Psoas muscle (tissue), 8 donors: ENCODE measurements at regions of chr6 and their contacts with region 1.

Region 1: DNA sequence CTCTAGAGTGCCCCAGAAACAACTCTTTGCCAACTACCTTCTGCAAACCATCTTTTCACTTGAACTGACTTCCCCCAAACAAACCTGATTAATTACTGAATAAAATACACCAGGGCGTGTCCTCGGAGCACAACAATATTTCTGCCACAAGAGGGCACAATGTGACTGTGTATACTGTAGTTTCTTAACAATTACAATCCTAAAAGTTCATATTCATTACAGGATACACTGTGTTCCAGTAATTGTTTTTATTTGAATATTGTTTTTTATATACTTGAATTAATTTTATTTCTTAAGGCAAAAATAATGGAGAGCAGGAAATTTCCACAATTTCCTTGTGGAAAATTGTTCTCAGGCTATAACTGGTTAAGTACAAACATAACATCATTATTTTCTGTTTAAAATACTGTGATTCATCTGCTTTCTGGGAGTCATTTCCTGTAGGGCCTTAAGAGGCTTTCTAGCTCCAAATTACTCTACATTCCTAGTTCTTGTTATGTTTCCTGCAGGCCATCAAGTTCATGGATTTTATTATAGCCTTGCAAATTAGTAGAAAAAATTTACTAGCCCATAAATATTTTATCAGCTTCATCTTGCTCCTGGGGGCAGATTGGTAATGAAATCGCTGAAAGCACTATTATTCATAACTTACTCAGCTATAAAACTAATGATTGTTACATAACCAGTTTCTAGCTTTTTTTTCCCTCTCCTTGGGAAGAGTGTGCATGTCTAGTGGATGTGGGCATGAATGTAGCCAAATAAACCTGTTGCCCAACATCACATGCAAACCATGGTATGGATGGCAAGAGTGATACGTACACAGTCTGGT is 51.9 kb upstream of the SLC22A16 start:
- DNase-seq: no peak
- ATAC-seq: peak in 3 of 4 donors; percentile 68 to 76 (median 76)
- H3K4me3 ChIP-seq: no peak overlapping the region
- H3K27ac ChIP-seq: no peak overlapping the region
- H3K4me1 ChIP-seq: no peaks in the 10 kb centered on the region
- H3K27me3 ChIP-seq: no peaks in the 10 kb centered on the region
- CTCF ChIP-seq: peak; percentile 74

Region 2: GRCh38 chr6:110949679-110950285 is 421.5 kb after region 1 on chr6:
- intact Hi-C with region 1: loop called (anchors 1 to 10 kb)
- DNase-seq: no peak
- ATAC-seq: peak in 1 of 4 donors; percentile 65
- H3K4me3 ChIP-seq: no peak overlapping the region
- H3K27ac ChIP-seq: no peak overlapping the region
- H3K4me1 ChIP-seq: no peaks in the 10 kb centered on the region
- H3K27me3 ChIP-seq: no peaks in the 10 kb centered on the region
- CTCF ChIP-seq: peak; percentile 57

Region 3: GRCh38 chr6:110958329-110959192 is 430.2 kb after region 1 on chr6 and contains the start of gene GTF3C6:
- intact Hi-C with region 1: loop called in 1 of 2 experiments (anchors 10 kb)
- DNase-seq: peak; percentile 94 to 97
- ATAC-seq: peak; percentile 98 to 99 (median 98)
- H3K4me3 ChIP-seq: peak within 1 kb of the TSS; percentile 97
- H3K27ac ChIP-seq: peak within 1 kb of the TSS; percentile 98
- H3K4me1 ChIP-seq: peaks cover 7% of the 10 kb centered on the region
- H3K27me3 ChIP-seq: no peaks in the 10 kb centered on the region
- CTCF ChIP-seq: no peak
- total RNA-seq, gene GTF3C6: 112 to 143 (median 127) TPM

Region 4: GRCh38 chr6:110999634-111000270 is 471.4 kb after region 1 on chr6:
- intact Hi-C with region 1: loop called in 1 of 2 experiments (anchors 2 kb)
- DNase-seq: no peak
- ATAC-seq: peak in 1 of 4 donors; percentile 48
- H3K4me3 ChIP-seq: no peak overlapping the region
- H3K27ac ChIP-seq: no peak overlapping the region
- H3K4me1 ChIP-seq: no peaks in the 10 kb centered on the region
- H3K27me3 ChIP-seq: no peaks in the 10 kb centered on the region
- CTCF ChIP-seq: peak; percentile 51

Region 5: GRCh38 chr6:111210194-111210728 is 681.9 kb after region 1 on chr6:
- intact Hi-C with region 1: loop called in 1 of 2 experiments (anchors 10 kb)
- DNase-seq: no peak
- ATAC-seq: peak; percentile 56 to 78 (median 70)
- H3K4me3 ChIP-seq: no peak overlapping the region
- H3K27ac ChIP-seq: peak overlapping the region; percentile 70
- H3K4me1 ChIP-seq: peaks cover 28% of the 10 kb centered on the region
- H3K27me3 ChIP-seq: no peaks in the 10 kb centered on the region
- CTCF ChIP-seq: peak; percentile 72